ENCODE measurements at regions of chr4 and their contacts with region 1.

Region 1: DNA sequence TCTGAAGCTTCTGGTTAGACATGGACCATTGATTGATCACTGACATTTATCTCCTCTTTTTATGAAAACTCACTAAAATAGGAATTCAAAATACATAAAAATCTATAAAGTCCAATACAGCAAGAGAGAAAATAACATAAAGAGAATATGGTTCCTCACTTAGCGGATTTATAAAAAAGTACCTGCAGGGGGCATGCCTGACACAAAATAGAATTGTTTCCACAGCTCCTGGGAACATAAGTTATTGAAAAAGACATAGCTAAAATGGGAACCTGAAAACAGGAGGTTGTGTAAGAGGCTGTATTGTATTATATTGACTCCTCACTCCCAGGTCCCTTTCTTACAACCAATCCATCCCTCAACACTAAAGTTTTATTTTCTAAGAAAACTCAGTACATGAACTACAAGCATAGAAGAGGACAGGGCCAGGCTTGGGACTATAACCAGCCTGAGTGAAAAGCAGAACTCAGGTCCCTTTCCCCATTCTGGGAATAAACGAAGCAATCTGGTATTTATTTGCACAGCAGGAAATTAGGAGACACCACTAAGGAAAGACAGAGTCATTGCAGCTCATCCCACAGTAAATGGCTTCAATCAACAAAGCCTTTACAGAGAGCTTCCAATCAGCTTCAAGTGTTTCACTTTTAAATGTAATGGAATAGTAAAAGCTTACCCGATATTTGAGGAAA is 121.1 kb upstream of the NDST4 start:
- DNase-seq: peak; percentile 16
- H3K4me3 ChIP-seq: no peak overlapping the region
- H3K27ac ChIP-seq: no peak overlapping the region
- H3K4me1 ChIP-seq: no peaks in the 10 kb centered on the region
- H3K27me3 ChIP-seq: peaks cover 3% of the 10 kb centered on the region
- CTCF ChIP-seq: peak; percentile 33 to 56

Region 2: GRCh38 chr4:115082633-115083032 is 151.9 kb before region 1 on chr4:
- CTCF ChIA-PET with region 1: no interaction called
- dilution Hi-C with region 1: no loop called
- in situ Hi-C with region 1: no loop called
- intact Hi-C with region 1: loop called (anchors 10 kb)
- DNase-seq: no peak
- H3K4me3 ChIP-seq: no peak overlapping the region
- H3K27ac ChIP-seq: no peak overlapping the region
- H3K4me1 ChIP-seq: no peaks in the 10 kb centered on the region
- H3K27me3 ChIP-seq: no peaks in the 10 kb centered on the region
- CTCF ChIP-seq: no peak

Region 3: GRCh38 chr4:115537387-115537786 is 302.8 kb after region 1 on chr4:
- CTCF ChIA-PET with region 1: no interaction called
- dilution Hi-C with region 1: no loop called
- in situ Hi-C with region 1: loop called (anchors 10 to 25 kb)
- intact Hi-C with region 1: loop called (anchors 1 kb)
- DNase-seq: no peak
- H3K4me3 ChIP-seq: no peak overlapping the region
- H3K27ac ChIP-seq: no peak overlapping the region
- H3K4me1 ChIP-seq: no peaks in the 10 kb centered on the region
- H3K27me3 ChIP-seq: no peaks in the 10 kb centered on the region
- CTCF ChIP-seq: peak; percentile 7 to 32

Region 4: DNA sequence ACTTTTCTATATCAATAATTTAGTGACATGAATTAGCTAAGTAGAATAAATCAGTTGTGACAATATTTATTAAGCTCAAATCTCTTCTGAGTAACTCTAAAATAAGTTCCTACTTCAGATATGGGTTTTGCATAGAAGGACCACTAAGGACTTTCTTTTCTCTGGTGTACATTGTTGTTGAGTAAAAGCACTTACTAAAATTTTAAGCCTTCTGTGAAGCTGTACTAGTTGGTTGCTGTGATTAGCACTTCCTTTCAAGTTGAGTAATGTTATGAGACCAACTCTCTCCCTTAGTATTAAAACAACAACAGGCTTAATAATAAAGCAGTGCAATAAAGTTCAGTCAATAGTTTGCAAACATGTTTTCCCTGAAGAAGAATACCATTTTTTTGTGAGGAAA is 546.3 kb after region 1 on chr4:
- CTCF ChIA-PET with region 1: no interaction called
- dilution Hi-C with region 1: no loop called
- in situ Hi-C with region 1: no loop called
- intact Hi-C with region 1: loop called (anchors 1 kb)
- DNase-seq: no peak
- H3K4me3 ChIP-seq: no peak overlapping the region
- H3K27ac ChIP-seq: no peak overlapping the region
- H3K4me1 ChIP-seq: no peaks in the 10 kb centered on the region
- H3K27me3 ChIP-seq: no peaks in the 10 kb centered on the region
- CTCF ChIP-seq: no peak

Region 5: GRCh38 chr4:115851918-115852766 is 617.6 kb after region 1 on chr4:
- CTCF ChIA-PET with region 1: interaction called, 3 read pairs
- dilution Hi-C with region 1: no loop called
- in situ Hi-C with region 1: no loop called
- intact Hi-C with region 1: loop called (anchors 5 kb)
- DNase-seq: peak; percentile 32
- H3K4me3 ChIP-seq: no peak overlapping the region
- H3K27ac ChIP-seq: no peak overlapping the region
- H3K4me1 ChIP-seq: no peaks in the 10 kb centered on the region
- H3K27me3 ChIP-seq: no peaks in the 10 kb centered on the region
- CTCF ChIP-seq: peak; percentile 62 to 79

Measured in mammary epithelial cell (primary cell).